ENCODE measurements at regions of chr9 and their contacts with region 1.

Region 1: DNA sequence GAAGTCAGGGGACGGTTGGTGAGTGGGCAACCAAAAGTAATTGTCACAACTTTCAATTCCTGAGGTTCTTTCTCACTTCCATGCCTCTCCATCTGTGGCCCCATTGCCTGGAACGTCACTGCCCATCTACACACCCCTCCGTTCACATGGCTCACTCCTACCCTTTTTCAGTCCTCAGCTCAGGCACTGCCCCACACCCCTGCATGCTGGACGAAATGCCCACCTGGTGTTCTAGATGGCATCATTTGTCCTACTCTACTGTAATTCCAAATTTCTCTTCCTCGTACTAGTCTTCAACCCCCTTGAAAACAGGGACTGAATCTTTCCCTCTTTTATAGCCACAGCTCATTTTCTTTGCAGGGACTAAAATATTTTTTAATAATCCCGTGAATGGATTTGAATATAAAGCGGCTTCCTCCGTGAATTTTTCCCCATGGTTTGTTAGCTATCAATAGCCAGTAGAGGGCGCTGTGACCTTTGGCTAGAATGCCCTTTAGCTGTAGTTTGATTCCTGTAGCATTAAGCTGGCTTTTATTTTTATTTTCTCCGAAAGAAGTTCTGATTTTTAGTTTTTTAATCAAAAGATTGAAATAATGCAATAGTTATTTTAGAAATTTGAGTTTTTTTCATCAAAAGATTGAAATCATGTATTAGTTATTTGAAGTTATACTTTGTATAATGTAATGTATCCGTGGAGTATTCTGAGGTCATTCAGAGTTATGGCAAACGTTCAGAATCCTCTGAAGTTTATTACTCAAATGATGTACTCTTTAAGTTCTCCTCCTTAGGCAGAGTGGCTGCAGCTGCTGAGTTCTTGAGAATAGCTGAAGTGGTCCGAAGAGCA is 232.1 kb downstream of the SH3GL2 start:
- DNase-seq: peak; percentile 65
- ATAC-seq: peak in 1 of 2 donors; percentile 48

Region 2: GRCh38 chr9:18023332-18023731 is 212.4 kb after region 1 on chr9:
- intact Hi-C with region 1: no loop called
- DNase-seq: no peak
- ATAC-seq: no peak

Region 3: GRCh38 chr9:18208154-18209059 is 397.5 kb after region 1 on chr9:
- intact Hi-C with region 1: loop called (anchors 1 to 10 kb)
- DNase-seq: peak; percentile 41
- ATAC-seq: peak; percentile 43 to 59

Region 4: GRCh38 chr9:18215626-18216025 is 404.7 kb after region 1 on chr9:
- intact Hi-C with region 1: loop called (anchors 1 to 10 kb)
- DNase-seq: no peak
- ATAC-seq: no peak

Region 5: DNA sequence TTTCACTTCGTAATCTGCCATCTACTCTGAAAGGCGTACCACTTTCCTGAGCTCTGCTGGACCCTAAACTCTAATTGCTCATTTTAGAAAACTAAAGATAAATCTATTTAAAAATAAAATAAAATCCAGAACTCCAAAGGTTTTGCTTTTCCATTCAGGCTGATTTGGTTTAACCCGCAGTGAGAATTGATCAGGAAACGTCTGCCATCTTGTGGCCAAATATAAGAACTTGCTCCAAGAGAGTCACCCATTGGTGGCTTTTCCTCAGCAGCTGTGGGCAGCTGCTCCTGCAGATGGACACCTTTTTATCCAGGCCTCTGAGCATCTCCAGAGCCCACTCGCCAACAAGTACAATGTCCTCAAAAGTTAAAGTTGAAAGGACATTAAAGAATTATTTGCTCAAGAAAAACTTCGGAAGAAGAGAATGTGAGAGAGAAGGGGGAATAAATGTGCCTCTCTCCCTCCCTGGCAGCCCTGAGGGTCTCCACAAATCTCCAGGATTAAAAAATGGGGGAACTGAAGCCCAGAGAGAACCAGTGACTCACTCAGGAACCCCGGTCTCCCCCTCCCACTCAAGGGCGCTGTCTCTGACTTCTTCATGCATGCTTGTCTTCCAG is 1218.0 kb after region 1 on chr9:
- intact Hi-C with region 1: loop called in 1 of 2 experiments (anchors 5 kb)
- DNase-seq: no peak
- ATAC-seq: peak; percentile 66 to 70

Measured in left cardiac atrium (tissue), 4 donors.